ENCODE measurements at regions of chr19 and their contacts with region 1.

Region 1: DNA sequence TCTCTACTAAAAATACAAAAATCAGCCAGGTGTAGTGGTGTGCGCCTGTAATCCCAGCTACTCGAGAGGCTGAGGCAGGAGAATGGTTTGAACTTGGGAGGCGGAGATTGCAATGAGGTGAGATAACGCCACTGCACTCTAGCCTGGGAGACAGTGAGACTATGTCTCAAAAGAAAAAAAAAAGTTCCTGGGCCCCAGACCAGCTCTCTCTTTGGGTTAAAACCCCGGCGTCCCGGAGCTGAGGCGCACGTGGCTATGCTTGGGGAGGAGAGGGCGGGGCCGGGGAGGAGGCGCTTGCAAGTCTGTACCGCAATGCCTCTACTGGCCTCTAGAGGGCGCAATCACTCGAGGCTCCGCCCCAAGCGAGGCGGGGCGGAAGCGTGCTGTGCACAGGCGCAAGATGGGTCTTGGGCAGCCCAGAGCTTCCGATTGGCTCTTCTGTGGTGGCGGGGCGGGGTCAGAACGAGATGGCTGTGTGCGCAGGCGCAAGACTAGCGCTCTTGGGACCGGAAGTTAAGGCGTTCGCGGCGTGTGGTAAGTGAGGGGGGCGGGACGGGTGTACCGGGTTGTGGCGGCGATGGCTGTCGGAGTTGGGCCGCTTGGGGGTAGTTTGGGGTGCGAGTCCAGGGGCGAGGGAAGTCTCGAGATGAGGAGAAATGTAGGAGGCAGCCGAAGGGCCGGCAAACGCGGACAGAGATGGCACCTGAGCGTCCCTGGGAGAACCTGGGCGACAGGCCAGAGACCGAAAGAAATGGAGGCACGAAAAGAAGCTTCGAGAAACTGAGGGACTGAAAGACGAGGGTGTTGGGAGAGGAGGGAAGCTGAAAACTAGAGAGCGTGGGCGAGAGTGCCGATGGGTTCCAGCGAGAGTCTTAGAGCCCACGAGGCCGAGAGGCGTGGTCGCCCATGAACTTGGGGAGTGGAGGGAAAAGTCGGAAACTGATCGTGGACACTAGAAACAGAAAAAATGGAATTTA is at the start of gene DHX34:
- DNase-seq: peak; percentile 97
- H3K4me3 ChIP-seq: peak within 1 kb of the TSS; percentile 74 to 94 (median 78)
- H3K27ac ChIP-seq: peak within 1 kb of the TSS; percentile 59
- H3K4me1 ChIP-seq: no peaks in the 10 kb centered on the region
- H3K27me3 ChIP-seq: no peaks in the 10 kb centered on the region
- CTCF ChIP-seq: peak; percentile 90 to 99
- total RNA-seq, gene DHX34: 10.5 to 22.4 TPM

Region 2: GRCh38 chr19:47210689-47211316 is 138.3 kb before region 1 on chr19:
- CTCF ChIA-PET with region 1: no interaction called
- dilution Hi-C with region 1: loop called (anchors 5 kb)
- in situ Hi-C with region 1: no loop called
- intact Hi-C with region 1: no loop called
- DNase-seq: peak; percentile 54
- H3K4me3 ChIP-seq: no peak overlapping the region
- H3K27ac ChIP-seq: peak overlapping the region; percentile 45
- H3K4me1 ChIP-seq: no peaks in the 10 kb centered on the region
- H3K27me3 ChIP-seq: no peaks in the 10 kb centered on the region
- CTCF ChIP-seq: peak; percentile 82 to 84

Region 3: GRCh38 chr19:47381653-47382279 is 32.7 kb after region 1 on chr19:
- CTCF ChIA-PET with region 1: no interaction called
- dilution Hi-C with region 1: no loop called
- in situ Hi-C with region 1: no loop called
- intact Hi-C with region 1: loop called (anchors 5 kb)
- DNase-seq: no peak
- H3K4me3 ChIP-seq: no peak overlapping the region
- H3K27ac ChIP-seq: no peak overlapping the region
- H3K4me1 ChIP-seq: no peaks in the 10 kb centered on the region
- H3K27me3 ChIP-seq: no peaks in the 10 kb centered on the region
- CTCF ChIP-seq: no peak

Region 4: DNA sequence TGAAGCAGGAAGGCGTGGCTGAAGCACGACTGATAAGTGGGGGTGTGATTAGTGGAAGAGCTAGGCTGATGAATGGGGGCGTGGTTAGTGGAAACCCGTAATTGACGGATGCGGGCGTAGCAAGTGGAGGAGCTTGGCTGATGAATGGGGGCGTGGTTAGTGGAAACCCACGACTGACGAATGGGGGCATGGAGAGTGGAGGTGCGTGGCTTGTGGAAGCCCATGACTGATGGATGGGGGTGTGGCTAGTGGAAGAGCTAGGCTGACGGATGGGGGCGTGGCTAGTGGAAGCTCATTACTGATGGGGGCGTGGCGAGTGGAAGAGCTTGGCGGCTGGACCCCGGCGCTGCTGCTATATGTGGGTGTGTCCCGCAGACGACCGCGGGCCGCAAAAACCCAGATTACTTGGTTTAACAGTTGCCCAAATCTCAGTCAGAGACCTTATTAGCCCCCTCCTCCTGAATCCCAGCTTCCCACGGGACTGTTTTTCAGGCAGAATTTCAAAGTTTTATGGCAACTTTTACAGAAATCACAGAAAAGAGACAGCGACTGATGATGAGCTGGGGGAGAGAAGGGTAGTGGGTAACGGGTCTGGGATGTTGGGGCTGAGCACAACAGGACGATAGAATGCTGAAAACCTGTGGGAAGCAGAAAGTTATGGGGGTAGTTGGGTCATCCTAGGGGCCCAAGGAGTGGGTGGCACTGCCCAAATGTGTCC is 79.2 kb after region 1 on chr19:
- CTCF ChIA-PET with region 1: interaction called, 5 read pairs
- dilution Hi-C with region 1: no loop called
- in situ Hi-C with region 1: no loop called
- intact Hi-C with region 1: loop called (anchors 2 kb)
- DNase-seq: peak; percentile 96
- H3K4me3 ChIP-seq: peak overlapping the region in 1 of 3 experiments; percentile 1
- H3K27ac ChIP-seq: no peak overlapping the region
- H3K4me1 ChIP-seq: peaks cover 20% of the 10 kb centered on the region
- H3K27me3 ChIP-seq: no peaks in the 10 kb centered on the region
- CTCF ChIP-seq: no peak

Region 5: DNA sequence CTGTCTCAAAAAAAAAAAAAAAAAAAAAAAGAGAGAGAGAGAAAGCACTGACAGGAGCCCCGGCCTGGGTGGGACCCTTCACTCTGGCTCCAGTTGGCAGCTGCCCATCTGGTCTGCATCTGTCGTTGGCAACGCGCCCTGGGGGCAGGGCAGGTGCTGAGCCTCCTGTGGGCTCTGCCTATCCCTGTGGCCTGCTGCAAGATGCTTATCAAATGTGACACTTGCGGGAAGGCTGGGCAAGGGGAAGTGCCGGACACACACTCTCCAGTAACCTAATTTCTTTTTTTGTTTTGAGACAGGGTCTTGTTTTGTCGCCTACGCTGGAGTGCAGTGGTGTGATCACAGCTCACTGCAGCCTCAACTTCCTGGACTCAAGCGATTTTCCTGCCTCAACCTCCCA is 145.6 kb after region 1 on chr19:
- CTCF ChIA-PET with region 1: no interaction called
- dilution Hi-C with region 1: loop called (anchors 5 kb)
- in situ Hi-C with region 1: no loop called
- intact Hi-C with region 1: no loop called
- DNase-seq: no peak
- H3K4me3 ChIP-seq: no peak overlapping the region
- H3K27ac ChIP-seq: no peak overlapping the region
- H3K4me1 ChIP-seq: no peaks in the 10 kb centered on the region
- H3K27me3 ChIP-seq: no peaks in the 10 kb centered on the region
- CTCF ChIP-seq: no peak